Activated T-helper 1 cell treated with anti-CD3 and anti-CD28 coated beads, Interleukin-12 subunit alpha, Interleukin-12 subunit beta, Interleukin-2, Interleukin-4 antibody, amounts not matched to agents 30 ng/mL and 10 ng/mL and 1 ng/mL, durations not matched to agents 14 hours and 24 hours and 36 hours (primary cell): ENCODE measurements at regions of chr2 and their contacts with region 1.

Region 1: DNA sequence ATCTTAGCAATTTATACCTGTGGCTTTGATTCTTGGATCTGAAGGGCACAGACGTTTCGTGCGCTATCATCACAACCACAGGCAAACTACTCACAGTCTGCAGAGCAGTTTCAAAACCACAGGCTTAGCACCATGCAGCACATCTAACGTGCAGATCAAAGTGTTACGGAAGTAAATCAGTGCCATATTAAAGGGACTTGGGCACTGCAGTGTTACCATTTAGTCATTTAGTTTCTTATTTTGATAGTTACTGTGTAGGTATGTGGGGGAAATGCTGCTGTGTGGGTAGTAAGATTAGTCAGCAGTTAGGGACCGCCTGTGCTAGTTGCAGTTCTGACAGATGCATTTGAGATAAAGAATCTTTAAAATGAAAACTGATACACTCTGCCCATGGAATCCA is 384.0 kb downstream of the NBAS start:
- DNase-seq: peak; percentile 68
- H3K4me3 Mint-ChIP-seq: peak overlapping the region; percentile 13
- H3K27ac Mint-ChIP-seq: peak overlapping the region; percentile 13
- H3K4me1 Mint-ChIP-seq: peaks cover 50% of the 10 kb centered on the region
- H3K27me3 Mint-ChIP-seq: peaks cover 5% of the 10 kb centered on the region

Region 2: GRCh38 chr2:14915983-14916382 is 261.1 kb before region 1 on chr2:
- intact Hi-C with region 1: no loop called
- DNase-seq: no peak
- H3K4me3 Mint-ChIP-seq: no peak overlapping the region
- H3K27ac Mint-ChIP-seq: no peak overlapping the region
- H3K4me1 Mint-ChIP-seq: no peaks in the 10 kb centered on the region
- H3K27me3 Mint-ChIP-seq: peaks cover 2% of the 10 kb centered on the region

Region 3: GRCh38 chr2:15142069-15142873 is 34.8 kb before region 1 on chr2:
- intact Hi-C with region 1: loop called (anchors 1 kb)
- DNase-seq: peak; percentile 72
- H3K4me3 Mint-ChIP-seq: peak overlapping the region; percentile 53
- H3K27ac Mint-ChIP-seq: peak overlapping the region; percentile 92
- H3K4me1 Mint-ChIP-seq: peaks cover 25% of the 10 kb centered on the region
- H3K27me3 Mint-ChIP-seq: no peaks in the 10 kb centered on the region

Region 4: GRCh38 chr2:15223887-15224286 is 46.8 kb after region 1 on chr2:
- intact Hi-C with region 1: loop called (anchors 1 kb)
- DNase-seq: no peak
- H3K4me3 Mint-ChIP-seq: no peak overlapping the region
- H3K27ac Mint-ChIP-seq: no peak overlapping the region
- H3K4me1 Mint-ChIP-seq: no peaks in the 10 kb centered on the region
- H3K27me3 Mint-ChIP-seq: no peaks in the 10 kb centered on the region

Region 5: GRCh38 chr2:15378148-15378908 is 201.2 kb after region 1 on chr2:
- intact Hi-C with region 1: loop called (anchors 2 kb)
- DNase-seq: no peak
- H3K4me3 Mint-ChIP-seq: no peak overlapping the region
- H3K27ac Mint-ChIP-seq: no peak overlapping the region
- H3K4me1 Mint-ChIP-seq: peaks cover 14% of the 10 kb centered on the region
- H3K27me3 Mint-ChIP-seq: no peaks in the 10 kb centered on the region

Region 6: DNA sequence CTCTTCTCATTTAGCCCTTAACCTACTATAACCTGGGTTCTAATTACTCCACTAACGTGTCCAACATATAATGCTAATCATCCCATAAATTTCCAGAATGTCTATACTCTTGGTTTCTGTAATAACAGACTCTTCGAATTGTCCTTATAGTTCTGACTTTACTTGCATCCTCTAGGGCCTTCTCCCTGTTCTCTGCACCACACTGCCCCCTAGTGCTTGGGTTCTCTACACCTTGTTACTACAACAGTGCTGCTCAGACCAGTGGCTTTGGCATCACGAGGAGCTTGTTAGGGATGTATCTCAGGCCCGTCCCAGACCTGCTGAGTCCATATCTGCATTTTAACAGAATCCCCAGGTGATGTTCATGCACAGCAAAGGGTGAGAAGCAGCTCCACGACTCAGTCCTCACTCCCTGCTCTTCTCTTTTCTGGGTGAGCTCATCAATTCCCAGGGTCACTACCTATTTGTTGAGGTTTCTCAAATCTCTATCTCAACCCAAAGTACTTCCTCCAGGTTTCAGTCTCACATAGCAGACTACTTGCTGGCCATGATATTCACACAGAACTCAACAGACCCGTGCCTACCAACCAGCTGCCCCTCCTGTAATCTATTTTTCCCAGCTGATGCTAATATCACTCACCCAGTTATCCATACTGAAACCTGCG is 400.1 kb after region 1 on chr2:
- intact Hi-C with region 1: loop called (anchors 1 kb)
- DNase-seq: peak; percentile 74
- H3K4me3 Mint-ChIP-seq: no peak overlapping the region
- H3K27ac Mint-ChIP-seq: no peak overlapping the region
- H3K4me1 Mint-ChIP-seq: no peaks in the 10 kb centered on the region
- H3K27me3 Mint-ChIP-seq: no peaks in the 10 kb centered on the region